K562 (cell line): ENCODE measurements at regions of chr9 and their contacts with region 1.

Region 1: GRCh38 chr9:117644133-117644931 is 59.9 kb upstream of the TLR4 start:
- DNase-seq: peak; percentile 30 to 57 (median 41)
- ATAC-seq: peak; percentile 78
- H3K4me3 ChIP-seq: no peak overlapping the region
- H3K27ac ChIP-seq: no peak overlapping the region
- H3K4me1 ChIP-seq: no peaks in the 10 kb centered on the region
- H3K27me3 ChIP-seq: no peaks in the 10 kb centered on the region
- CTCF ChIP-seq: peak; percentile 69 to 89 (median 83)
- EP300 ChIP-seq: no peak
- POLR2A ChIP-seq: no peak
- RAD21 ChIP-seq: peak; percentile 77 to 86

Region 2: DNA sequence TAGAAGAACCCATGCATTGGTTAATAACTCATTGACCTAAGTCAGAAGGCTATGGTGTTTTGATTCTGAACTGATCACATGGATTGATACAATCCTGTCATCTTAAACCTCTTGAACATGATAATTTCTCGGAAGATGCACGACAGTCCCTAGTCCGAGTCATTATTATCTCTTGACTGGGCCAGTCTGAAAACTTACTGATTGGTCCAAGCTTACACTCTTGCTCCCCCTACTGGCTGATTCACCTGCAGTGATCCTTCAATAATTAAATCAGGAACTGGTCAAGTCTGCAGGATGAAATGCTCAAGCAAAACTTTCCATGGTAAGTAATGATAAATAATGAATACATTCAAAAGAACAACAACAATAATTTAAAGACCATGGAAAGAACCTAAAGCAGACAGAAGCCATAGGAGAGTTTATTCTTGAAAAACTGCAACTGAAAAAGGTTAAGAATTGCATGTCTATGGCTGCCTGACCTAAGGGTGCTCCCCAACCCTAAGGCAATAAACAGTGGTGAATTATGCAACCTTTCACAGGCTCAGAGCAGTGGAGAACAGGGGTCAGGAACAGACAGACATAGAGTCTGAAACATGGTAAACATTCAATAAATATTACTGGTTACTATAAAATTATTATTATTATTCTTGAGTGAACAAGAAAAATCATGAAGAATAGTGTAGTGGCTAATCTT is 1645.6 kb after region 1 on chr9:
- CTCF ChIA-PET with region 1: no interaction called
- POLR2A ChIA-PET with region 1: no interaction called
- in situ Hi-C with region 1: no loop called
- intact Hi-C with region 1: loop called (anchors 10 kb)
- DNase-seq: peak; percentile 12 to 34 (median 23)
- ATAC-seq: no peak
- H3K4me3 ChIP-seq: no peak overlapping the region
- H3K27ac ChIP-seq: no peak overlapping the region
- H3K4me1 ChIP-seq: no peaks in the 10 kb centered on the region
- H3K27me3 ChIP-seq: no peaks in the 10 kb centered on the region
- CTCF ChIP-seq: peak in 2 of 3 experiments; percentile 31 to 42; a peak in 1 of 6 replicates
- EP300 ChIP-seq: no peak
- POLR2A ChIP-seq: no peak
- RAD21 ChIP-seq: peak; percentile 16 to 29; a peak in 1 of 4 replicates

Region 3: GRCh38 chr9:119365291-119366027 is 1721.1 kb after region 1 on chr9:
- CTCF ChIA-PET with region 1: no interaction called
- POLR2A ChIA-PET with region 1: no interaction called
- in situ Hi-C with region 1: no loop called
- intact Hi-C with region 1: loop called (anchors 10 kb)
- DNase-seq: peak in 3 of 4 experiments; percentile 6 to 14 (median 11)
- ATAC-seq: no peak
- H3K4me3 ChIP-seq: no peak overlapping the region
- H3K27ac ChIP-seq: no peak overlapping the region
- H3K4me1 ChIP-seq: no peaks in the 10 kb centered on the region
- H3K27me3 ChIP-seq: no peaks in the 10 kb centered on the region
- CTCF ChIP-seq: peak; percentile 21 to 36 (median 35); a peak in 3 of 6 replicates
- EP300 ChIP-seq: no peak
- POLR2A ChIP-seq: no peak
- RAD21 ChIP-seq: peak; percentile 24 to 40; a peak in 2 of 4 replicates